Brain microvascular endothelial cell (primary cell): ENCODE measurements at regions of chr2 and their contacts with region 1.

Region 1: DNA sequence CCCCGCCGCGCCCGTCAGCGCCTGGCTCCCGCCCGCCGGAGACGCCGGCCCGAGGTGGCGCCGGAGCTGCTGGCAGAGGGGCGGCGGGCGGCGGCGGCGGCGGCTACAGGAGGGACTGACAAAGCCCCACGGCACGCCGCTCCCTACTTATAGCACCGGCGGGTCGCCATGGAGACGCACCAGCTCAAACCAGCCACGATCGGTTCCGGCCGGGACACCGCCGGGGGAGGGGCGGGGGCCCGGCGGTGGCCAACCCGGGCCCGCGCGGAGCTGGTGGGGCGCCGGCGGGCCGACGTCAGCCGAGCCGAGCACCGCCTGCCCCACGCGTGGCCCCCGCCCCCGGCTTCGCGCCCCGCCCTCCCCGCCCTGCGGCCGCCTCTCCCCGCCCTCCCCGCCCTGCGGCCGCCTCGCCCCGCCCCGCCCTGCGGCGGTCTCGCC is at the start of gene ODC1:
- DNase-seq: peak; percentile 87
- H3K4me3 ChIP-seq: peak within 1 kb of the TSS; percentile 66
- H3K27ac ChIP-seq: peak within 1 kb of the TSS; percentile 88
- H3K27me3 ChIP-seq: no peaks in the 10 kb centered on the region
- CTCF ChIP-seq: no peak

Region 2: GRCh38 chr2:10122386-10123280 is 325.6 kb before region 1 on chr2 and contains the start of gene RRM2:
- in situ Hi-C with region 1: loop called (anchors 25 kb)
- DNase-seq: peak; percentile 93
- H3K4me3 ChIP-seq: peak within 1 kb of the TSS; percentile 77
- H3K27ac ChIP-seq: peak within 1 kb of the TSS; percentile 81
- H3K27me3 ChIP-seq: no peaks in the 10 kb centered on the region
- CTCF ChIP-seq: no peak

Region 3: GRCh38 chr2:11446733-11447248 is 998.6 kb after region 1 on chr2:
- in situ Hi-C with region 1: no loop called
- DNase-seq: peak; percentile 69
- H3K4me3 ChIP-seq: no peak overlapping the region
- H3K27ac ChIP-seq: no peak overlapping the region
- H3K27me3 ChIP-seq: no peaks in the 10 kb centered on the region
- CTCF ChIP-seq: peak; percentile 87